Activated CD8-positive, alpha-beta T cell treated with anti-CD3 and anti-CD28 coated beads, Interleukin-2, amount 10 ng/mL, durations not matched to agents 7 days and 5 days (primary cell): ENCODE measurements at regions of chr19 and their contacts with region 1.

Region 1: DNA sequence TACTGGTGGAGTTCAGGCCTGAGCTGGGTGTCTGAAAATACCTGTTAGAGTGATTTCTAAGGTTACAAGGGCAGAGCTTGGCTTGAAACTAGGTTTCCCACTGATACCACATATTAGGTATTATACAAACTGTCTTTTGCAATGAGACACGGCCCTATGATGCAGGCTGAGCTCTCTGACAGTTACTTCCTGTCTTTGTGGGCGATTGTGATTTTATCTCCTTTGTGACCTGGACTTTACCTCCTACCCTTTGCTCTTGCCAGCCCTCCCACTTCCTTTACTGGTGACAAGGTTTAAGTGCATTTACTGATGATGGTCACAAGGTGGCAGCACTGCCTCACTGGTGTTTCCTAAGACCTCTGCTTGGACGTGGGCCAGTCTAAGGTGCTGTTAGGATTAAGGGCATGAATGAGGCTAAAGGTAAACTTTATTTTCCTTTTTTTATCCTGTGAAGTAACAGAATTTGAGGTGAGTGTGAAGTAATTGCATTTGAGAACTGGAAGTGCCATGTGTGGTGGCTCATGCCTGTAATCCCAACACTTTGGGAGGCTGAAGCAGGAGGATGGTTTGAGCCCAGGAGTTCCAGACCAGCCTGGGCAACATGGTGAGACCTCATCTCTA is 7.7 kb upstream of the CXCL17 start:
- DNase-seq: peak; percentile 92
- ATAC-seq: peak; percentile 99
- H3K4me3 Mint-ChIP-seq: no peak overlapping the region
- H3K27ac Mint-ChIP-seq: no peak overlapping the region
- H3K4me1 Mint-ChIP-seq: peaks cover 41% of the 10 kb centered on the region
- H3K27me3 Mint-ChIP-seq: no peaks in the 10 kb centered on the region

Region 2: GRCh38 chr19:42301656-42302203 is 148.7 kb before region 1 on chr19 and contains the start of gene PRR19:
- CTCF ChIA-PET with region 1: no interaction called
- POLR2A ChIA-PET with region 1: no interaction called
- DNase-seq: no peak
- ATAC-seq: peak; percentile 28
- H3K4me3 Mint-ChIP-seq: peak within 1 kb of the TSS; percentile 86
- H3K27ac Mint-ChIP-seq: peak within 1 kb of the TSS; percentile 91
- H3K4me1 Mint-ChIP-seq: peaks cover 26% of the 10 kb centered on the region
- H3K27me3 Mint-ChIP-seq: no peaks in the 10 kb centered on the region
- total RNA-seq, gene PRR19: 0.44 to 0.55 TPM

Region 3: DNA sequence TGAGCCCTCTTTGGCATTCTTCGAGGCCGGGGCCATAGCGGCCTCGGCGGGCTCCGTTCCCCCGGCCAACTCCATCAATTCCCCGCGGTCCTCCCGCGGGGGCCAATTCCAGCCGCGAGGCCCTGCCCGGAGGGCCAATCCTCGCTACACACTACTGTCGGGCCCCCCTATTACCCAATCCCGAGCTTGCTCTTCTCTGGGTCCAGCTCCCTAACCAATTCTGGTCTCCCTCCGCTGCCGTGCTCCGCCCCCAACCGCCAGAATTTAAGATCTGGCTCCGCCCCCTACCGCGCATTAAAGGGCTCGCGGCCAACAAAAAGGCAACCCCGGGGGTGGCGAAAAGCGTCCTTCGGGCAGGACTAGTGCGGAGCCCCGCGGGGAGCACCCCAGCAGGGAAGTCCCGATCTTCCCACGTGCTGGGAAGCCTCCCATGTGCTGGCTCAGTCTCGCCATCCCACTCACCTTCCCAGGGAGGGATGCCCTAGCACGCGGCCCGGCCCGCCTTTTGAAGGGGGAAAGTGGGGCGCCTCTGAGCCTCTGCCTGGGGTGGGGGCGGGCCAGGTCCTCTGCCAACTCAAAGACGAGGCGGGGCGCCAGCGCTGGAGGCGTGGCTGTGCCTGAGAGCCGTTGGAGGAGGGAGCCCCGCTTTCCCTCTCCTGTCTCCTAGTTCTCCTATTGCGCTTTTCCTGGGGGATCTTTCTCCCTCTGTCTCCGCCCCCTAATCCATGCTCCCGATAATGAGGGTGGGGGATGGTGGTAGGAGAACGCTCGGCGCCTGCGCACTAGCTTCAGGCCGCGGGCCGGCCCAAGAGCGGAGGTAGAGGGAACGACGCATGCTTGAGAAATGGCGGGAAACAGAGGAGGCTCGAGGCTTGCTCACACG is 26.7 kb before region 1 on chr19:
- CTCF ChIA-PET with region 1: interaction called, 13 read pairs
- POLR2A ChIA-PET with region 1: no interaction called
- DNase-seq: peak; percentile 96
- ATAC-seq: peak; percentile 98
- H3K4me3 Mint-ChIP-seq: peak overlapping the region; percentile 98
- H3K27ac Mint-ChIP-seq: peak overlapping the region; percentile 94
- H3K4me1 Mint-ChIP-seq: peaks cover 45% of the 10 kb centered on the region
- H3K27me3 Mint-ChIP-seq: no peaks in the 10 kb centered on the region

Region 4: GRCh38 chr19:42465827-42466280 is 15.4 kb after region 1 on chr19:
- CTCF ChIA-PET with region 1: interaction called, 27 read pairs
- POLR2A ChIA-PET with region 1: no interaction called
- DNase-seq: no peak
- ATAC-seq: no peak
- H3K4me3 Mint-ChIP-seq: no peak overlapping the region
- H3K27ac Mint-ChIP-seq: peak overlapping the region; percentile 73
- H3K4me1 Mint-ChIP-seq: peaks cover 37% of the 10 kb centered on the region
- H3K27me3 Mint-ChIP-seq: no peaks in the 10 kb centered on the region

Region 5: GRCh38 chr19:42497492-42498168 is 47.2 kb after region 1 on chr19:
- CTCF ChIA-PET with region 1: interaction called, 15 read pairs
- POLR2A ChIA-PET with region 1: no interaction called
- DNase-seq: no peak
- ATAC-seq: no peak
- H3K4me3 Mint-ChIP-seq: no peak overlapping the region
- H3K27ac Mint-ChIP-seq: peak overlapping the region; percentile 60
- H3K4me1 Mint-ChIP-seq: peaks cover 54% of the 10 kb centered on the region
- H3K27me3 Mint-ChIP-seq: no peaks in the 10 kb centered on the region

Region 6: GRCh38 chr19:42514449-42514848 is 64.0 kb after region 1 on chr19:
- CTCF ChIA-PET with region 1: interaction called, 24 read pairs
- POLR2A ChIA-PET with region 1: no interaction called
- DNase-seq: no peak
- ATAC-seq: no peak
- H3K4me3 Mint-ChIP-seq: no peak overlapping the region
- H3K27ac Mint-ChIP-seq: no peak overlapping the region
- H3K4me1 Mint-ChIP-seq: peaks cover 41% of the 10 kb centered on the region
- H3K27me3 Mint-ChIP-seq: no peaks in the 10 kb centered on the region

Region 7: GRCh38 chr19:42534391-42534790 is 84.0 kb after region 1 on chr19:
- CTCF ChIA-PET with region 1: interaction called, 209 read pairs
- POLR2A ChIA-PET with region 1: interaction called, 20 read pairs
- DNase-seq: no peak
- ATAC-seq: no peak
- H3K4me3 Mint-ChIP-seq: no peak overlapping the region
- H3K27ac Mint-ChIP-seq: no peak overlapping the region
- H3K4me1 Mint-ChIP-seq: peaks cover 7% of the 10 kb centered on the region
- H3K27me3 Mint-ChIP-seq: peaks cover 10% of the 10 kb centered on the region